ENCODE measurements at regions of chr14 and their contacts with region 1.

Region 1: GRCh38 chr14:39229222-39229543 is 4.5 kb upstream of the MIA2 start:
- DNase-seq: peak; percentile 73
- H3K4me3 Mint-ChIP-seq: no peak overlapping the region
- H3K27ac Mint-ChIP-seq: peak overlapping the region; percentile 93
- H3K4me1 Mint-ChIP-seq: peaks cover 48% of the 10 kb centered on the region
- H3K27me3 Mint-ChIP-seq: no peaks in the 10 kb centered on the region

Region 2: DNA sequence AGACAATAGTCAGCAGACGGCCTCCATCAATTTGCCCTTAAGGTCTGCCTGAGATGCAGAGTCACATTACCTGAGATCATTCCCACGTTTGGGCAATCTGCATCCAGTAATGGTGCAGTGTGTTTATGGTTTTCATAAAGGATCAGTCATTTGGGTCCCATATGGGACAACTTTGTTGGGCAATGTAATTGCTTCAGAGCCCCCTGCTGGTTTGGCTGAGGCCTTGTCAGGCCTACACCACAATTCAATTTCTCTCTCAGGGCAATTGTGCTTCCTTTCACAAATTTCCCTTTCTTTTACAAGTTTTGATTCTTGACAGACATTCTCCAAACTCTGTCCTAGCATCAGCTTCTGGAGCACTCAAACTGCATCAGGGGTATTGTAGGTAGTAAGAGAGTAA is 1212.7 kb before region 1 on chr14:
- intact Hi-C with region 1: no loop called
- DNase-seq: no peak
- H3K4me3 Mint-ChIP-seq: no peak overlapping the region
- H3K27ac Mint-ChIP-seq: no peak overlapping the region
- H3K4me1 Mint-ChIP-seq: no peaks in the 10 kb centered on the region
- H3K27me3 Mint-ChIP-seq: no peaks in the 10 kb centered on the region

Region 3: DNA sequence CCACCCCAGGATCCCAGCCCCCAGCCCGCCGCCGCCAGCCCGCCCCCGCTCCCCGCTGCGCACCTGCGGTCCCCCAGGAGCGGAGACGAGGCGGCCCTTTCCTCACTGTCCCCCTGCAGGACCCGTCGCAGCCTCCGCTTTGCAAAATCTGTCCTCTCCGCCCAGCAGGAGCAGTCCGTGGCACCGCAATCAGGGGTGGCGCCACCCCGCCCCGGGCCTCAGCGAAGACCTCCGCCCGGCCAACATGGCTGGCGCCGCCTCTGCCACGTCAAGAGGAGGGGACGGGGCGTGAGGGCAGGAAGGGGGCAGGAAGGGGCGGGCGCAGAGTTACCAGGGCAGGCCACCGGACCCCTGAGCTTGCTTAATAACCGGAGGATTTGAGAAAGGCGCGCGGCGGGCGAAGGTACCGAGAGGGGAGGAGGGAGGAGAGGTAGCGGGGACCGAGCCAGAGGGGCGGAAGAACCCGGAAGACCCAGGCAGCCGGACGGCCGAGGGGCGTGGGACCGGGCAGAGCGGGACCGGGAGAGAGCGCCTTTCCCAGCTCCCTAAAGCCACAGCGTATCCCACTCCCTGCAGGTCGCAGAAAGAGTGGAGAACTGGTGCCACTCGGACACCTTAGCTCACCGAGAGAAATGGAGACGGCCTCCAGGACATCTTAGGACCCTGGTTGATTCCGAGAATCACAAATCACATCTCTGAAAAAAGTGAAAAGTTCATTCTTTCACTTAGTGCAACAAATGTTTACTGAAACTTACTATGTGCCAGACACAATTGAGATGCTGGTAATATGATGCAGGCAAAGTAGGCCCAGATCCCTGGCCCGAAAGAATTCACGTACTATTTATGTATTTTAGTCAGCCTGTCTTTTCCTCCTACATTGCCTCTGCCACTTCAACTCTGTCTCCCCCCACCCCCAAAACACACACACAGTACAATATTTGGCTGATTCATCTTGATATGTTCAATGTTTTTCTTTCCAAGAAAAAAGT is 125.9 kb before region 1 on chr14 and contains the start of gene SEC23A:
- intact Hi-C with region 1: loop called (anchors 2 kb)
- DNase-seq: peak; percentile 82
- H3K4me3 Mint-ChIP-seq: peak within 1 kb of the TSS; percentile 98
- H3K27ac Mint-ChIP-seq: peak within 1 kb of the TSS; percentile 98
- H3K4me1 Mint-ChIP-seq: peaks cover 29% of the 10 kb centered on the region
- H3K27me3 Mint-ChIP-seq: no peaks in the 10 kb centered on the region
- total RNA-seq, gene SEC23A: 76.4 and 86.7 TPM in 2 replicates

Region 4: GRCh38 chr14:39174560-39175444 is 54.4 kb before region 1 on chr14 and contains the start of gene PNN:
- intact Hi-C with region 1: loop called (anchors 1 kb)
- DNase-seq: peak; percentile 97
- H3K4me3 Mint-ChIP-seq: peak within 1 kb of the TSS; percentile 95
- H3K27ac Mint-ChIP-seq: peak within 1 kb of the TSS; percentile 98
- H3K4me1 Mint-ChIP-seq: peaks cover 28% of the 10 kb centered on the region
- H3K27me3 Mint-ChIP-seq: no peaks in the 10 kb centered on the region
- total RNA-seq, gene PNN: 115 and 119 TPM in 2 replicates

Region 5: GRCh38 chr14:39266871-39267591 is 37.8 kb after region 1 on chr14:
- intact Hi-C with region 1: loop called (anchors 1 kb)
- DNase-seq: peak; percentile 73
- H3K4me3 Mint-ChIP-seq: peak overlapping the region; percentile 75
- H3K27ac Mint-ChIP-seq: peak overlapping the region; percentile 93
- H3K4me1 Mint-ChIP-seq: peaks cover 43% of the 10 kb centered on the region
- H3K27me3 Mint-ChIP-seq: no peaks in the 10 kb centered on the region

Region 6: GRCh38 chr14:39368261-39368959 is 139.2 kb after region 1 on chr14:
- intact Hi-C with region 1: loop called (anchors 1 kb)
- DNase-seq: no peak
- H3K4me3 Mint-ChIP-seq: no peak overlapping the region
- H3K27ac Mint-ChIP-seq: no peak overlapping the region
- H3K4me1 Mint-ChIP-seq: peaks cover 5% of the 10 kb centered on the region
- H3K27me3 Mint-ChIP-seq: no peaks in the 10 kb centered on the region

Region 7: GRCh38 chr14:39432179-39432618 is 203.0 kb after region 1 on chr14 and contains the start of gene FBXO33:
- intact Hi-C with region 1: loop called (anchors 1 kb)
- DNase-seq: peak; percentile 97
- H3K4me3 Mint-ChIP-seq: peak within 1 kb of the TSS; percentile 99
- H3K27ac Mint-ChIP-seq: peak within 1 kb of the TSS; percentile 100
- H3K4me1 Mint-ChIP-seq: peaks cover 35% of the 10 kb centered on the region
- H3K27me3 Mint-ChIP-seq: no peaks in the 10 kb centered on the region
- total RNA-seq, gene FBXO33: 15.7 and 16.2 TPM in 2 replicates